A549 (cell line): ENCODE measurements at regions of chr5 and their contacts with region 1.

Region 1: DNA sequence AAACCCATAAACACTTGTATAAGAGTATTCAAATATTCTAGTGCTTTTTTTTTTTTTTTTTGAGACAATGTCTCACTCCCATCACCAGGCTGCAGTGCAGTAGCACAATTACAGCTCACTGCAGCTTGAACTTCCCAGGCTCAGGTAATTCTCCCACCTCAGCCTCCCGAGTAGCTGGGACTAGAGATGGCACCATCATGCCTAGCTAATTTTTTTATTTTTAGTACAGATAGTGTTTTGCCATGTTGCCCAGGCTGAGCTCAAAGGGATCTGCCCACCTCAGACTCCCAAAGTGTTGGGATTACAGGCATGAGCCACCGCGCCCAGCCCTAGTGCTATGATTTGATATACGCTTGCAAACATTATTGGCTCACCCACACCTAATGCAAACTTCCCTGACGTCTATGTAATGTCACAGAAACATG is 11.8 kb downstream of the IL6ST start:
- DNase-seq: peak in 1 of 2 experiments; percentile 60
- ATAC-seq: peak; percentile 79 to 84; a peak in 5 of 6 replicates
- H3K4me3 ChIP-seq: no peak overlapping the region
- H3K27ac ChIP-seq: peak overlapping the region; percentile 6 to 66; a peak in 3 of 6 replicates
- H3K4me1 ChIP-seq: peaks cover 39% of the 10 kb centered on the region
- CTCF ChIP-seq: peak; percentile 43; the same call in 2 of the 3 replicates
- EP300 ChIP-seq: no peak
- POLR2A ChIP-seq: no peak
- RAD21 ChIP-seq: peak; percentile 55 to 65

Region 2: GRCh38 chr5:55800924-55801323 is 182.0 kb before region 1 on chr5:
- CTCF ChIA-PET with region 1: no interaction called
- POLR2A ChIA-PET with region 1: no interaction called
- DNase-seq: no peak
- ATAC-seq: no peak
- H3K4me3 ChIP-seq: no peak overlapping the region
- H3K27ac ChIP-seq: no peak overlapping the region
- H3K4me1 ChIP-seq: no peaks in the 10 kb centered on the region
- CTCF ChIP-seq: no peak
- EP300 ChIP-seq: no peak
- POLR2A ChIP-seq: no peak
- RAD21 ChIP-seq: no peak

Region 3: GRCh38 chr5:55923177-55923771 is 59.7 kb before region 1 on chr5:
- CTCF ChIA-PET with region 1: no interaction called
- POLR2A ChIA-PET with region 1: no interaction called
- DNase-seq: no peak
- ATAC-seq: no peak
- H3K4me3 ChIP-seq: no peak overlapping the region
- H3K27ac ChIP-seq: peak overlapping the region; percentile 31 to 82; a peak in 3 of 6 replicates
- H3K4me1 ChIP-seq: peaks cover 25% of the 10 kb centered on the region
- CTCF ChIP-seq: no peak
- EP300 ChIP-seq: no peak
- POLR2A ChIP-seq: no peak
- RAD21 ChIP-seq: no peak

Region 4: GRCh38 chr5:56070851-56071465 is 88.0 kb after region 1 on chr5:
- CTCF ChIA-PET with region 1: interaction called, 10 read pairs
- POLR2A ChIA-PET with region 1: no interaction called
- DNase-seq: no peak
- ATAC-seq: no peak
- H3K4me3 ChIP-seq: no peak overlapping the region
- H3K27ac ChIP-seq: peak overlapping the region; percentile 44 to 48; a peak in 5 of 6 replicates
- H3K4me1 ChIP-seq: peaks cover 32% of the 10 kb centered on the region; the same call in 2 of the 3 replicates
- CTCF ChIP-seq: no peak
- EP300 ChIP-seq: no peak
- POLR2A ChIP-seq: no peak
- RAD21 ChIP-seq: no peak

Region 5: DNA sequence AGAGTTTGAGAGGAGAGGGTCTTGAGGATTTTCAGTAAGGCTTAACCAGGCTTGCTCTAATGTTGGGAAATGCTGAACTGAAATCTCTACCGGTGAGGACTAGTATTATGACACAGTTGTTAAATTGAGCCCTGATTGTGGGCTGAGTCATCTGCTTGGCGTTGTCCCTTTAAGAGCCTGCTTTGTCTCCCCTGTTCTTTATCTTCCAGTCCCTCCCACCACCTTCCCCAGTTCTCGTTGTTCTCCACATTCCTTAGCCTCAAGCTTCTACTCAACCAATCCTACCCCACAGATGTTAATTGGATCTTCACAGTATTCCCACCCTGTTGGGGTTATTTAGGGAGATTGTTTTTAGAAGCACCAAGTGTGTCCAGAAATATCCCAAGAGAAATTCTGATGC is 192.5 kb after region 1 on chr5:
- CTCF ChIA-PET with region 1: no interaction called
- POLR2A ChIA-PET with region 1: no interaction called
- DNase-seq: peak in 1 of 2 experiments; percentile 22
- ATAC-seq: peak; percentile 62 to 68; a peak in 5 of 6 replicates
- H3K4me3 ChIP-seq: no peak overlapping the region
- H3K27ac ChIP-seq: peak overlapping the region in 1 of 2 experiments; percentile 62; a peak in 4 of 6 replicates
- H3K4me1 ChIP-seq: peaks cover 19% of the 10 kb centered on the region
- CTCF ChIP-seq: no peak
- EP300 ChIP-seq: no peak
- POLR2A ChIP-seq: no peak
- RAD21 ChIP-seq: no peak